PC-3 (cell line): ENCODE measurements at regions of chr9 and their contacts with region 1.

Region 1: GRCh38 chr9:16705121-16705604 is 165.3 kb downstream of the BNC2 start:
- DNase-seq: peak; percentile 95
- ATAC-seq: peak; percentile 83
- H3K4me3 ChIP-seq: peak overlapping the region; percentile 70
- H3K27ac ChIP-seq: peak overlapping the region; percentile 99
- H3K4me1 ChIP-seq: peaks cover 54% of the 10 kb centered on the region
- H3K27me3 ChIP-seq: no peaks in the 10 kb centered on the region
- CTCF ChIP-seq: no peak

Region 2: DNA sequence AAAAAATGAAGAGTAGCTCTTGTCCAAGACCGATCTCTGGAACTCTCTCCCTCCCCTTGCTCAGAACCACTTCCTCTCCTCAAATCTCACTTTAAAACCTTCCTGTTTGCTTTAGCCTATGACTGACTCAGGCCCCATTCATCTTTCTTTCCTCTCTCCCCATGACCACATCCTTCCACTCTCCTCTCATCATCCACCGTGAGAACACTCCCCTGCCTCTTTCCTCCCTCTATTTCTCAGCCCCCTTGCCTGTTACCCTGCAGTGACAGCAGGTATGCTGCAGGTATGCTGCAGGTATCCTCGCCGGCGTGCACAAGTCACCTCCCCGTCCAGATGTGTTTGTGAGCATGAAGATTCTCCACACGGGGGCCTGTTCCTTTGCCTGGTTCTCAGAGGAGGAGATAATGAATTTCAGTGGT is 647.0 kb before region 1 on chr9:
- CTCF ChIA-PET with region 1: no interaction called
- POLR2A ChIA-PET with region 1: no interaction called
- intact Hi-C with region 1: loop called (anchors 5 kb)
- DNase-seq: peak; percentile 93
- ATAC-seq: peak; percentile 76
- H3K4me3 ChIP-seq: no peak overlapping the region
- H3K27ac ChIP-seq: peak overlapping the region; percentile 100
- H3K4me1 ChIP-seq: peaks cover 42% of the 10 kb centered on the region
- H3K27me3 ChIP-seq: no peaks in the 10 kb centered on the region
- CTCF ChIP-seq: peak; percentile 55

Region 3: GRCh38 chr9:16626577-16627131 is 78.5 kb before region 1 on chr9:
- CTCF ChIA-PET with region 1: no interaction called
- POLR2A ChIA-PET with region 1: no interaction called
- intact Hi-C with region 1: loop called (anchors 5 kb)
- DNase-seq: peak; percentile 78
- ATAC-seq: peak; percentile 99
- H3K4me3 ChIP-seq: peak overlapping the region; percentile 56
- H3K27ac ChIP-seq: peak overlapping the region; percentile 56
- H3K4me1 ChIP-seq: peaks cover 23% of the 10 kb centered on the region
- H3K27me3 ChIP-seq: no peaks in the 10 kb centered on the region
- CTCF ChIP-seq: no peak

Region 4: GRCh38 chr9:16671591-16672137 is 33.5 kb before region 1 on chr9:
- CTCF ChIA-PET with region 1: no interaction called
- POLR2A ChIA-PET with region 1: no interaction called
- intact Hi-C with region 1: loop called (anchors 2 kb)
- DNase-seq: peak; percentile 90
- ATAC-seq: peak; percentile 89
- H3K4me3 ChIP-seq: peak overlapping the region; percentile 35; the same call in 1 of the 2 replicates
- H3K27ac ChIP-seq: peak overlapping the region; percentile 100
- H3K4me1 ChIP-seq: peaks cover 55% of the 10 kb centered on the region
- H3K27me3 ChIP-seq: no peaks in the 10 kb centered on the region
- CTCF ChIP-seq: no peak

Region 5: GRCh38 chr9:16871356-16872151 is 166.4 kb after region 1 on chr9:
- CTCF ChIA-PET with region 1: no interaction called
- POLR2A ChIA-PET with region 1: no interaction called
- intact Hi-C with region 1: loop called (anchors 2 kb)
- DNase-seq: peak; percentile 71
- ATAC-seq: peak; percentile 41
- H3K4me3 ChIP-seq: peak overlapping the region; percentile 89
- H3K27ac ChIP-seq: peak overlapping the region; percentile 64
- H3K4me1 ChIP-seq: peaks cover 33% of the 10 kb centered on the region
- H3K27me3 ChIP-seq: no peaks in the 10 kb centered on the region
- CTCF ChIP-seq: no peak

Region 6: DNA sequence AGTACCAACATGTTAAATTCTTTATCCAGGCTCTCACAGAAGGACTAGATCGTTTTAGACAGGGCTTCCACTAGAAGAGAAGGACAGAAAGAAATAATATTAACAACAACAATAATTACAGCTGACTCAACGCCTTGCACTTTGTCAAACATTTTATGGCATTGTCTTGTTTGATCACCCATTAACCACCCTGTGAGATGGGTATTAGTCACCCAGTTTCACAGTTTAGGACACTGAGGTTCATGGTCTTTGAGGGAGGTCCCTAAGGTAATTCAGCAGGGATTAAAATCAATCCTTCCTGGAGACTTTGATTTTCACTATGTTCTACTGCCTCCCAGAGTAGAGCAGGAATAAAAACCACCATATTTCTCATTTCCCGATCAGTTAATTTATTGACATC is 216.7 kb after region 1 on chr9:
- CTCF ChIA-PET with region 1: interaction called, 4 read pairs
- POLR2A ChIA-PET with region 1: no interaction called
- intact Hi-C with region 1: loop called (anchors 2 kb)
- DNase-seq: peak; percentile 77
- ATAC-seq: peak; percentile 95
- H3K4me3 ChIP-seq: no peak overlapping the region
- H3K27ac ChIP-seq: peak overlapping the region; percentile 52
- H3K4me1 ChIP-seq: peaks cover 21% of the 10 kb centered on the region
- H3K27me3 ChIP-seq: no peaks in the 10 kb centered on the region
- CTCF ChIP-seq: peak; percentile 59

Region 7: DNA sequence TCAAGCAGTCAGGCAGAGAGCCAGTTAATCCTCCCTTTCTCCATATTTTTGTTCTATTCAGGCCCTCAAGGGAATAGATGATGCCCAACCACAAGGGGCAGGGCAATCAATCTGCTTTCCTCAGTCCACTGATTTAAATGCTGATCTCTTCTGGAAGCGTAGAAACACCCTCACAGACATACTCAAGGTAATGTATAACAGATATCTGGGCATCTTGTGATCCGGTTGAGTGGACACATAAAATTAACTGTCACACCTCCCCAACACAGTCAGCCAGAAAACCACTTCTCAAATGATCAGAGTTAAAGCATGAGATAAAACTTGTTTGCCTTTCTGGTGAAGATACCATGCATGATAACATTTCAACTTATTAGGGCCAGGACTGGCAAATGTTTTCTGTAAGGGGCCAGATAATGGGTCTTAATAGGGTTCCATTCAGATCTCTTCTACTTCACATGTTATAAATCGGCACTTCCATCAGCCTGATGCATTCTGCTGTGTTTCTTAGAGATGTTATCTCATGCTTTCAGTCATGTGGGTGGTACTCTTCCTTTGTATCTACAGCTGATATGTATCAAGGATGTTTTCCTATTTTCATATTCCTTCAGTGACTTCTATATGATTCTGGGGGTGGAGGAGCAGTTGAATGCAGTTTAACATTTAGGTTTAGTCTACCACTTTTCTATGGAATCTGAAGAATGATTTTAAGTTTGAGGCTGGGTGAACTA is 370.8 kb after region 1 on chr9:
- CTCF ChIA-PET with region 1: no interaction called
- POLR2A ChIA-PET with region 1: no interaction called
- intact Hi-C with region 1: no loop called
- DNase-seq: no peak
- ATAC-seq: no peak
- H3K4me3 ChIP-seq: no peak overlapping the region
- H3K27ac ChIP-seq: no peak overlapping the region
- H3K4me1 ChIP-seq: no peaks in the 10 kb centered on the region
- H3K27me3 ChIP-seq: no peaks in the 10 kb centered on the region
- CTCF ChIP-seq: no peak